Esophagus muscularis mucosa (tissue), 4 donors: ENCODE measurements at regions of chr6 and their contacts with region 1.

Region 1: GRCh38 chr6:37566111-37566949 is 66.6 kb upstream of the CCDC167 start:
- DNase-seq: no peak
- H3K4me3 ChIP-seq: peak overlapping the region; percentile 42 to 48 (median 44)
- H3K27ac ChIP-seq: no peak overlapping the region
- H3K4me1 ChIP-seq: peaks cover 12 to 16% (median 14%) of the 10 kb centered on the region in 4 donors
- H3K27me3 ChIP-seq: peaks cover 0 to 59% (median 3%) of the 10 kb centered on the region in 4 donors
- CTCF ChIP-seq: peak; percentile 75 to 96 (median 83)
- EP300 ChIP-seq: no peak
- POLR2A ChIP-seq: no peak

Region 2: DNA sequence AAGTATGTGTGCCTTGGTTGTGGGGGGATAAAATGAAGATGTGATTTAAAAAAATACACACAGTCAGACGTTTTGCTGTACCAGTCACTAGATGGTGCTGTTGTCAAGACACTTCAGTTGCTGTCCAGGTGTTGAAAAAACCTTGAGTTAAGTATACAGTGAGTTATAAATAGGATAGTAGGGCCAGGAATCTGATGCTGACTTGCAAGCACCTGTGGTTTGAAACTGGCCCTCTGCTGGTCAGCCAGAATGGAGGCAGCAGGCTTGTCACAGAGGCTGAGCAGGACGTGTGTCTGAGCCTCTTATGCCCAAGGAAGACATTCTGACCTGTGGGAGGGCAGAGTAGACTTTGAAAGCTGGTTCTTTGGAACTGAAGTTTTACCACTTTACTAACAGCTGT is 184.8 kb before region 1 on chr6:
- intact Hi-C with region 1: loop called (anchors 5 kb)
- DNase-seq: no peak
- H3K4me3 ChIP-seq: no peak overlapping the region
- H3K27ac ChIP-seq: no peak overlapping the region
- H3K4me1 ChIP-seq: no peaks in the 10 kb centered on the region
- H3K27me3 ChIP-seq: no peaks in the 10 kb centered on the region
- CTCF ChIP-seq: peak; percentile 44 to 56 (median 44)
- EP300 ChIP-seq: no peak
- POLR2A ChIP-seq: no peak

Region 3: GRCh38 chr6:37489660-37490361 is 76.5 kb before region 1 on chr6:
- intact Hi-C with region 1: loop called (anchors 5 kb)
- DNase-seq: no peak
- H3K4me3 ChIP-seq: no peak overlapping the region
- H3K27ac ChIP-seq: no peak overlapping the region
- H3K4me1 ChIP-seq: peaks cover 18 to 35% (median 28%) of the 10 kb centered on the region in 4 donors
- H3K27me3 ChIP-seq: no peaks in the 10 kb centered on the region
- CTCF ChIP-seq: no peak
- EP300 ChIP-seq: no peak
- POLR2A ChIP-seq: no peak